Activated CD4-positive, alpha-beta memory T cell treated with anti-CD3 and anti-CD28 coated beads for 36 hours (primary cell): ENCODE measurements at regions of chr3 and their contacts with region 1.

Region 1: DNA sequence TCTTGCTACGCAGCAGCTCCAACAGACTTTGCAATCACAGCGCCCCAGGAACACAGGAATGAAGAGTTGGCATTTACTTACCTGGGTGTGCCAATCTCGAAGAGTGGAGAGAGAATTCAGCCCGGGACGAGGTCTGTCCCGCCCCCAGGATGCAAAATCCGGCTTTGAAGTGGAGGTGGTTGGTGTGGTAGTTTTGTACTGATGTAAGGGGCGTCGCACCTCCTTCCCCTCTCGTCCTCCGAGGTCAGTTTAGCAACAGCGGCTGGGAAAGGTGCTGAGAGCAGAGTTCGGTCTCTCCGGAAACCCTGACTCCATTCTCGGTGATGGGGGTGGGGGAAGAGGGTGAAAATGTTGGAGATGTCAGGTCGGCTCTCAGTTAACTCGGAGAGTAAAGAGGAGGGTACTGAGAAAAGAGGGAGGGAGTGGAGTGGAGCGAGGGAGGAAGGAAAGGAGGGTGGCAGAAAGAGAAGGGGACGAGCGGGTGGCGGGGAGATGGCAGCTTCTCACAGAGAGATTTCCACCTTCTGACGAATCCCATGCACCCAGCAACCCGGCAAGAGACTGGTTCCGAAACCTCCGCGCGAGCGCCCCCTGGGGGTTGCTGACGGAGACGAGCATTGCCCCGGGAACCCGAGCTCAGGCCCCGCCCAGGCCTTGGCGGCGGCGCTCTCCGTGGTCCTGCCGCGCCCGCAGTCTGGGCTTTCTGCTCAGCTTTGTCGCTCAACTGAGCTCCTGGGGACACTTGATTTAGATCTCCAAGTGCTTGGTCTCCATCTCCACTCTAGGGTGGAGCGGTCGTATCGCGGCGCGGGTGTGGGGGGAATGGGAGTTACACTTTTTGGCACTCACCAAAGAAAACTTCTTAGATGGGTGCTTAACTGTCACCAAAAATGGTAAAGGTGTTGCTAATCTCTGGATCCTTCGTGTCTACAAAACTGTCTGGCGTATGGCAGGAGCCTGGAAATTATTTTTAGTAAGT is at the start of gene CPNE4:
- DNase-seq: peak; percentile 83
- H3K4me3 Mint-ChIP-seq: no peak within 1 kb of the TSS
- H3K27ac Mint-ChIP-seq: no peak within 1 kb of the TSS
- H3K4me1 Mint-ChIP-seq: peaks cover 10% of the 10 kb centered on the region
- H3K27me3 Mint-ChIP-seq: peaks cover 64% of the 10 kb centered on the region
- total RNA-seq, gene CPNE4: not detected

Region 2: DNA sequence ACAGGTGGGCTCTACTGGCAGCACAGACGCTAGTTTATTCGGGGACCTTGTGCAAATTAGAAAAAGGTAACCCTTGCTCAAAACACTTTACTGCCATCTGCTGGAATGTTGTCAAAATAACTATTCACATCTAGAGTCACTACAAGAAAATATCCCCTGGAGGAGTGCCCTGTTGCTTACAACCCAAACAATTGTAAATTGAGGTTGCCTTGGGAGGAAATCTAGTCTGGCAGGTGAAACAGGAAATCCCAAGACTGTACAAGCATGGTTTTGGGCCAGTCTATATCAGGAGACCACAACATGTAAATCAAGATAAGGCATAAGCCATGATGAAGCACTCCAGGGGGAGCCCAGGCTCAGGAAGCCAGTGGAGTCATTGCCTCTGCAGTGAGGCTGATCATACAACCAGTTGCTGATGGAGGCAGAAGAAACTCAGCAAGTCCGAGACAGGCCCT is 145.6 kb after region 1 on chr3:
- CTCF ChIA-PET with region 1: interaction called, 4 read pairs
- POLR2A ChIA-PET with region 1: no interaction called
- intact Hi-C with region 1: loop called (anchors 5 kb)
- DNase-seq: no peak
- H3K4me3 Mint-ChIP-seq: no peak overlapping the region
- H3K27ac Mint-ChIP-seq: no peak overlapping the region
- H3K4me1 Mint-ChIP-seq: peaks cover 6% of the 10 kb centered on the region
- H3K27me3 Mint-ChIP-seq: peaks cover 3% of the 10 kb centered on the region

Region 3: GRCh38 chr3:132210476-132211346 is 175.9 kb after region 1 on chr3:
- CTCF ChIA-PET with region 1: interaction called, 12 read pairs
- POLR2A ChIA-PET with region 1: no interaction called
- intact Hi-C with region 1: no loop called
- DNase-seq: peak; percentile 34
- H3K4me3 Mint-ChIP-seq: no peak overlapping the region
- H3K27ac Mint-ChIP-seq: no peak overlapping the region
- H3K4me1 Mint-ChIP-seq: no peaks in the 10 kb centered on the region
- H3K27me3 Mint-ChIP-seq: peaks cover 14% of the 10 kb centered on the region